ENCODE measurements at regions of chr17 and their contacts with region 1.

Region 1: DNA sequence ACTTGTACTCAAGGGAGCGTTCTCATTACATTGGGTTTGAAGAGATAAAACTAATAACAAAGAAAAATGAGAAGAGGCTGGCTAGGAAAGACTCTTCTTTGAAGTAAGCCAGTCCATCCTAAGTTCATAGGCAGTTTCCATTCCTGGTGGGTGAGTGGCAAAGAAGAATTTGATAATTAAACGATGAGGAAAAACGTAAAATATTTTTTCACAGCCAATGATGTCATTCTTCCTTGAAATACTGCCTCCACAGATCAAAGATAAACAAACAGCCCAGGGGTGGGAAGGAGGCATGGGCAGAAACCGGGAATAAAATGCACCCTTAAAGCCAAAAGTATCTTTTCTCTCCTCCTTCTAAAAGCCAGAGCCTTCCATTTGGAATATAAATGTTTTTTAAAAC is 346.6 kb downstream of the PMP22 start:
- DNase-seq: no peak
- ATAC-seq: no peak
- H3K4me3 ChIP-seq: no peak overlapping the region
- H3K27ac ChIP-seq: no peak overlapping the region
- H3K4me1 ChIP-seq: no peaks in the 10 kb centered on the region
- H3K27me3 ChIP-seq: peaks cover 0 to 4% (median 0%) of the 10 kb centered on the region in 7 donors
- CTCF ChIP-seq: no peak

Region 2: GRCh38 chr17:14525551-14526455 is 392.7 kb before region 1 on chr17:
- intact Hi-C with region 1: no loop called
- DNase-seq: no peak
- ATAC-seq: no peak
- H3K4me3 ChIP-seq: no peak overlapping the region
- H3K27ac ChIP-seq: no peak overlapping the region
- H3K4me1 ChIP-seq: no peaks in the 10 kb centered on the region
- H3K27me3 ChIP-seq: no peaks in the 10 kb centered on the region
- CTCF ChIP-seq: no peak

Region 3: GRCh38 chr17:14805348-14805747 is 113.2 kb before region 1 on chr17:
- intact Hi-C with region 1: no loop called
- DNase-seq: no peak
- ATAC-seq: no peak
- H3K4me3 ChIP-seq: no peak overlapping the region
- H3K27ac ChIP-seq: no peak overlapping the region
- H3K4me1 ChIP-seq: no peaks in the 10 kb centered on the region
- H3K27me3 ChIP-seq: no peaks in the 10 kb centered on the region
- CTCF ChIP-seq: no peak

Region 4: GRCh38 chr17:14959106-14959648 is 40.6 kb after region 1 on chr17:
- intact Hi-C with region 1: loop called in 1 of 10 experiments (anchors 10 kb)
- DNase-seq: no peak
- ATAC-seq: no peak
- H3K4me3 ChIP-seq: no peak overlapping the region
- H3K27ac ChIP-seq: no peak overlapping the region
- H3K4me1 ChIP-seq: no peaks in the 10 kb centered on the region
- H3K27me3 ChIP-seq: peaks cover 0 to 4% (median 0%) of the 10 kb centered on the region in 7 donors
- CTCF ChIP-seq: no peak